Lower leg skin (tissue), 4 donors: ENCODE measurements at regions of chr19 and their contacts with region 1.

Region 1: GRCh38 chr19:6639439-6639838 is 30.5 kb downstream of the TNFSF14 start:
- DNase-seq: no peak
- H3K4me3 ChIP-seq: no peak overlapping the region
- CTCF ChIP-seq: no peak
- POLR2A ChIP-seq: no peak

Region 2: GRCh38 chr19:6501740-6502648 is 137.4 kb before region 1 on chr19 and contains the start of gene TUBB4A:
- intact Hi-C with region 1: no loop called
- DNase-seq: no peak
- H3K4me3 ChIP-seq: peak within 1 kb of the TSS; percentile 37
- CTCF ChIP-seq: no peak
- POLR2A ChIP-seq: no peak
- total RNA-seq, gene TUBB4A: 0.99 to 17.0 (median 4.8) TPM

Region 3: DNA sequence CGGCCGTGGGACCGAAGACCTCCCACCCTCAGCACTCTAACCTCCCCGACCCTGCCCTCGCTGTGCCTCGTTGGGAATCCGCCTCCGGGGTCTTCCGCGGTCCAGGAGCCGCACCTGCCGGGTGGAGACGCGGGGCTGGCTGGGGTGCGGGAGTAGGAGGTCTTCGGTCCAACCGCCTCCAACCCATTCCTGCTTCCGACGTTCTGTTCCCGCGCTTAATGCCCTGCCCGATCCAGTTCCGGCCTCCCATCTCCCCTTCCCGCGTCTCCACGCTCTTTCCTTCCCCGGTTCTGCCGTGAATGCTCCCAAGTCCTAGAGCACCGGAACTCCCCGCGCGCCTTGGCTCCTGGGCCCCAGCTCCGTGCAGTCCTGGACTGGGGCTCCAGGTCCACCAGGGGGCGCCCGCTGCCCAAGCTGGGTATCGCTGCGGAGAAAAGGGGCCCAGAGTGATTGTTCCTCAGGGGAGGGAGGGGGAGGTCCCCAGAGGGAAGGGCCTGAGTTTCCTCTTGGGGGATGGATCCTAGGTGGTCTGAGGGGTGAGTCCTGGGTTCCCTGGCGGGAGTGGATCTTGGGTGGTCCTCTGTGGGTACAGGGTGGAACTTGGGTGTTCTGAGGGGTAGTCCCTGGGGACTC is 122.7 kb before region 1 on chr19:
- intact Hi-C with region 1: loop called (anchors 5 kb)
- DNase-seq: peak; percentile 75 to 97
- H3K4me3 ChIP-seq: peak overlapping the region; percentile 30
- CTCF ChIP-seq: peak in 1 of 3 donors; percentile 90
- POLR2A ChIP-seq: no peak